Caco-2 (cell line): ENCODE measurements at regions of chr6 and their contacts with region 1.

Region 1: GRCh38 chr6:43228951-43229802 is at the start of gene DNPH1:
- DNase-seq: peak; percentile 73 to 91
- H3K4me3 ChIP-seq: peak within 1 kb of the TSS; percentile 64
- H3K4me3 Mint-ChIP-seq: peak within 1 kb of the TSS; percentile 74
- H3K27ac Mint-ChIP-seq: peak within 1 kb of the TSS; percentile 75
- H3K4me1 ChIP-seq: peaks cover 11% of the 10 kb centered on the region
- H3K4me1 Mint-ChIP-seq: peaks cover 5% of the 10 kb centered on the region
- H3K27me3 ChIP-seq: no peaks in the 10 kb centered on the region
- H3K27me3 Mint-ChIP-seq: peaks cover 5% of the 10 kb centered on the region
- CTCF ChIP-seq: peak; percentile 52 to 91
- total RNA-seq, gene DNPH1: 56.1 and 62.6 TPM in 2 replicates

Region 2: DNA sequence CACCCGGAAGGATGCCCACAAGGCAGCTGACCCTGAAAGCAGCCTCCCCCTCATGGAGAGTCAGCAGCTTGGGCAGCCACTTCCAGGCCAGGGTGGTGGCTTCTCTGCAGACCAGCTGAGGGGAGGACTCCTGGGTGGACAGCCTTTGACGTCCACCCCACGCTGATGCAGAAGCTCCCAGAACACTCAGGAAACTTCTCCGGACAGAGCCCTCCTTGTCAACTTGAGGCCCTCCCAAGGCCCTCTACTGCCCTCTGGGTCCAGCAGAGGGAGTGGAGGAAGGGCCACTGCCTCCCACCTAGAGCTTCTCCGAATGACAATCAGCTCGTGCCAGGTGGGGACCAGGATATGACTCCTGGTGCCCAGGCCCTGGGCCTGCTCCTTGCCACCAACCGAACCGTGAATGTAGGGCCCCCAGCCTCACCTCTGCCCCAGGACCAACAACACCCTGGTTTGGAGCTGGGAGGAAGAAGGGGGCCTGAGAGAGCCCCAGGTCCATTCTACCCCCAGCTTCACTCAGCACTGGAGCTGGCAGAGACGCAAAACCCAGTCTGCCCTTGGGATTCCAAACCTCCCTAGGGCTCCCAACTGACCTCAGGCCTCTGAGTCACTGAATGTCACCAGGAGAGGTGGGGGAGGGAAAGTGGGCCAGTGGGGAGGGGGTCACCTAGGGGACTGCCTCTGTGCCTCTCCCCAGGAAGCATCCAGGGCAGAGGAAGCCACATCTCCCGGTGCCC is 58.0 kb after region 1 on chr6:
- CTCF ChIA-PET with region 1: interaction called, 19 read pairs
- POLR2A ChIA-PET with region 1: interaction called, 3 read pairs
- intact Hi-C with region 1: no loop called
- DNase-seq: peak in 1 of 2 experiments; percentile 26
- H3K4me3 ChIP-seq: no peak overlapping the region
- H3K4me3 Mint-ChIP-seq: no peak overlapping the region
- H3K27ac Mint-ChIP-seq: no peak overlapping the region
- H3K4me1 ChIP-seq: peaks cover under 1% of the 10 kb centered on the region; the same call in 1 of the 2 replicates
- H3K4me1 Mint-ChIP-seq: no peaks in the 10 kb centered on the region
- H3K27me3 ChIP-seq: no peaks in the 10 kb centered on the region
- H3K27me3 Mint-ChIP-seq: no peaks in the 10 kb centered on the region
- CTCF ChIP-seq: peak; percentile 26 to 61

Region 3: DNA sequence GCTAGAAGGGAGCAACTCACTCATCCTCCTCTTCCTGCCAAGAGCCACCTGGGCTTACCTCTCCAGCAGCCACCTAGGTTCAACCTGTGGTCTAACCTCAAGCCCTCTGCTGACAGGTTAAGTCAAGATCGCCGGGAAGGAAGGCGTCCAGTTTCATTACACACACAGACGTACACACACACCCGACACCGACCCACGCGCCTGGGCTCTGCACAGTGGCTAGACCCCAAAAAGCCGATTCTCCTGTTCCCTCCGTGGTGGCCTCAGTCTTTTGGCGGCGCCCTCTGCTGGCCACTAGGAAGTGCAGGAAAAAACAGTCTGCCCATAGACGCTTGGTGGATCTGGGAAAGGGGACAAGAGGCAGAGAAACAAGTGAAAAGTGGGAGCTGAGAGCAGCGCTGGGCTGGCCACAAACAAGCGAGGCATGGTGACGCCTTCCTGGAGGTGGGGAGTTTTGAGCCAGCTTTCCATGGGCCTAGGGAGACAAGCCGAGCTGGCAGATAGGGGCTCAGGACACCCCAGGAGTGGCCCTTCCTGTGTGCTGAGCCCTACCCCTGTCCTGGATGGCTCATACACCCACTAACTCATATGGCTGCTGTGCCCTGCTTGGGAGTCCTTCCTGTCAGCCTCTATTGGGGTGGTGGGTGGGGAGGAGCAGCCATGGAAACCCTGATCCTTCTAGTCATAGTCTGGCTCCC is 845.4 kb after region 1 on chr6:
- CTCF ChIA-PET with region 1: no interaction called
- POLR2A ChIA-PET with region 1: no interaction called
- intact Hi-C with region 1: no loop called
- DNase-seq: peak; percentile 64 to 65
- H3K4me3 ChIP-seq: no peak overlapping the region
- H3K4me3 Mint-ChIP-seq: peak overlapping the region; percentile 86
- H3K27ac Mint-ChIP-seq: peak overlapping the region; percentile 12
- H3K4me1 ChIP-seq: peaks cover 9% of the 10 kb centered on the region
- H3K4me1 Mint-ChIP-seq: peaks cover 7% of the 10 kb centered on the region
- H3K27me3 ChIP-seq: no peaks in the 10 kb centered on the region
- H3K27me3 Mint-ChIP-seq: peaks cover 4% of the 10 kb centered on the region
- CTCF ChIP-seq: peak; percentile 88 to 91